Activated CD4-positive, alpha-beta memory T cell treated with anti-CD3 and anti-CD28 coated beads for 36 hours (primary cell): ENCODE measurements at regions of chr17 and their contacts with region 1.

Region 1: GRCh38 chr17:8057691-8058114 is 18.8 kb downstream of the ALOX15B start:
- DNase-seq: peak; percentile 46
- H3K4me3 Mint-ChIP-seq: no peak overlapping the region
- H3K27ac Mint-ChIP-seq: no peak overlapping the region
- H3K4me1 Mint-ChIP-seq: peaks cover 12% of the 10 kb centered on the region
- H3K27me3 Mint-ChIP-seq: peaks cover 42% of the 10 kb centered on the region

Region 2: DNA sequence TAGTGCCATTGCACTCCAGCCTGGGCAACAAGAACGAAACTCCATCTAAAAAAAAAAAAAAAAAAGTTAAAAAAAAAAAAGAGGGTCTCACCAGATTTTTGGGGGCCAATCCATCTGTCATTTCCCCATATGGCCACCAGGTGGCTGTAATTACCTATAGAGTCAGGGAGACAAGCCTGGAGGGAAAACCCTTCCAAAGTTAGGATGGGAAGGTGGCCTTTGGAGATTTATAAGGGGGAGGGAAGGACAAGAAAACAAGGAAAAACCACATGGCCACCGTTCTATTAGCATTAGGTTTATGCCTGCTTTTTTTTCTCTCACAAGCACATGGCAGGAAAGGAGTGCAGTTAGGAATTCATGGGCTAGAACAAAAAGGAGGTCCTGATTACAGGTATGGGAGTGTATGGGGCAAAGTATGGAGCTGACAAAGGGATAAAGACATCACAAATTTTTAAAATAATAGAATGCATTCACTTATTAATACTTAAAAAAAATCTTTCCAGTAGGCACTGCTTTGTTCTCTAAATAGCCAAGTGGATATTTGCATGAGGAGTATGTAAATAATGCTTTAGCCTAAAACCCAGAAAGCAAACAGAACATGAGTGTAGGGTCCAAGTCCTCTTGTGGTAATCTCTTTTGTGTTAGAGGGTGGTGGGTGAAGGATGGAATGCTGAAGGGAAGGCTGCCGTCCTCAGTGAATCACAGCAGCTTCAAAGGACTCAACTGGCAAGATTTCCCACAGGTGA is 194.8 kb before region 1 on chr17:
- CTCF ChIA-PET with region 1: interaction called, 25 read pairs
- POLR2A ChIA-PET with region 1: no interaction called
- intact Hi-C with region 1: no loop called
- DNase-seq: peak; percentile 39
- H3K4me3 Mint-ChIP-seq: no peak overlapping the region
- H3K27ac Mint-ChIP-seq: no peak overlapping the region
- H3K4me1 Mint-ChIP-seq: peaks cover 16% of the 10 kb centered on the region
- H3K27me3 Mint-ChIP-seq: no peaks in the 10 kb centered on the region

Region 3: DNA sequence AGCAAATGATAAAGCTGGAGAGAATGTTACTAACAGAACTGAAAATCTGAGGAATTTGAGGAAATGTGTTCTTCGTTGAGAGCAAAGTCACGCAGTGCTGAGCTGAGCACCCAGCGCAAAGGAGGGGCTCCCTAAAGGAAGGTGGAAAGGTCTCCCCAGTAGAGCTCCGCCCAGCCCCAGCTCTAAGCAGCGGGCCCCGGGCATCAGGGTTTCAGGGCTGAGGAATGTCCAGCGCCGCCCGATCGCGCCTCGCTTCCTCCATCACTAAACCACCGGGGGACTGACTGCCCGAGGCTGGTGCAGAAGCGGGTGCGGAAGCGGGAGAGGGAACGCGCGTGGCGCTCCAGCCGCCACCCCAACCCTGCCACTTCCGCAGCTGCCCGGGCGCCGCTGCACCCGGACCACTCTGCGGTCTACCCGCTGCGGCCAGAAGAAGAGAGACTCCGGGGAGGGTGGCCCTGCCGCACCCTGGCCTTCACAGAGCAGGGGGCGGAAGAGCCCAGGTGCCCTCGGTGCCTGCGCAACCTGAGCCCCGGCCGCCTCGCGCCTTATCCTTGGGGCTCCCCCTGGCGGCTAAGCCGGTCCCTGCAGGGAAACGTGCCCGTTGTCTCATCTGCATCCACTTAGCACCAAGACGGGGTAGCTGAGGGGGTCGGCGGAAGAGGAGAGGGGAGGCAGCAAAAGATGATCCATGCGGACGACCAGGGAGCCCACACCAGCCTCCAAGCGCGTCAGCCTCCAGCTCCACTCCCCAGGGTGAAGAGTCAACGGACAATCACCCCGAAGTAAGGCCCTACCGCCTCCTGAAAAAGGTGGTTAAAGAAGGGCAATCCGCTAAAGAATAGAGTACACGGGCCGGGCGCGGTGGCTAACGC is 67.7 kb before region 1 on chr17:
- CTCF ChIA-PET with region 1: interaction called, 39 read pairs
- POLR2A ChIA-PET with region 1: no interaction called
- intact Hi-C with region 1: no loop called
- DNase-seq: peak; percentile 95
- H3K4me3 Mint-ChIP-seq: peak overlapping the region; percentile 51
- H3K27ac Mint-ChIP-seq: peak overlapping the region; percentile 66
- H3K4me1 Mint-ChIP-seq: peaks cover 22% of the 10 kb centered on the region
- H3K27me3 Mint-ChIP-seq: peaks cover under 1% of the 10 kb centered on the region

Region 4: DNA sequence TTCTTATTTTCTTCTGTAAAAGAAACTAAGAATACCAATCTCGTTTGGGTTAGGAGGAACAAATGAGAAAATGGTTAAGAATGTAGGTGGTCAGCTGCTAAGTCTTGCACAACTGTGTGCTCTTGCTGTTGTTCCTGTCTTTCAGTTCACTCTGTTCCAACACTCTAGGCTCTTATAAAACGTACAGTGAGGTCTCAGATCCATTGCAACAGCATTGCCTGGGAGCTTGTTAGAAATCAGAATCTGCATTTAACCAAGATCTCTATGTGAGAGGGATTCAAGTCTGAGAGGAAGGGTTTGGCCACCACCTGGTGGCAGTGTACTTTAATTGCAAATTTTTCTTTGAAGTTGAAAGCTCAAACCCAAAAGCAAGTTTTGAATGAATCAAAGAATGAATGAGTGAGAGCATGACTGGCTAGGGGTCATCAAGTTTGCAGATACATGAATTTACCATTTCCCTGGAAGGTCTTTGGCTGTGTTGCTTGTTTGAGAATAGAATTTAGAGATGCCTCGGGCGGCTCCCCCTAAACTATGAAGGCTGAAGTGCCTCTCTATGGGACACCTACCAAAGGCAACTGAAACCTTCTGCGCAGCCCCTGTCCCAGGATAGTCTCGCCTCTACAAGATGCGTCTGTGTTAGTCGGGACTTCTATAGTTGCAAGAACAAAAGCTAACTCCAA is 16.3 kb before region 1 on chr17:
- CTCF ChIA-PET with region 1: interaction called, 31 read pairs
- POLR2A ChIA-PET with region 1: no interaction called
- intact Hi-C with region 1: no loop called
- DNase-seq: peak; percentile 62
- H3K4me3 Mint-ChIP-seq: no peak overlapping the region
- H3K27ac Mint-ChIP-seq: no peak overlapping the region
- H3K4me1 Mint-ChIP-seq: no peaks in the 10 kb centered on the region
- H3K27me3 Mint-ChIP-seq: peaks cover 22% of the 10 kb centered on the region

Region 5: GRCh38 chr17:8091033-8091687 is 33.5 kb after region 1 on chr17:
- CTCF ChIA-PET with region 1: interaction called, 64 read pairs
- POLR2A ChIA-PET with region 1: no interaction called
- intact Hi-C with region 1: no loop called
- DNase-seq: no peak
- H3K4me3 Mint-ChIP-seq: no peak overlapping the region
- H3K27ac Mint-ChIP-seq: no peak overlapping the region
- H3K4me1 Mint-ChIP-seq: peaks cover 10% of the 10 kb centered on the region
- H3K27me3 Mint-ChIP-seq: peaks cover 24% of the 10 kb centered on the region

Region 6: GRCh38 chr17:8156246-8156992 is 98.7 kb after region 1 on chr17:
- CTCF ChIA-PET with region 1: interaction called, 12 read pairs
- POLR2A ChIA-PET with region 1: no interaction called
- intact Hi-C with region 1: no loop called
- DNase-seq: peak; percentile 100
- H3K4me3 Mint-ChIP-seq: no peak overlapping the region
- H3K27ac Mint-ChIP-seq: no peak overlapping the region
- H3K4me1 Mint-ChIP-seq: peaks cover 56% of the 10 kb centered on the region
- H3K27me3 Mint-ChIP-seq: no peaks in the 10 kb centered on the region

Region 7: DNA sequence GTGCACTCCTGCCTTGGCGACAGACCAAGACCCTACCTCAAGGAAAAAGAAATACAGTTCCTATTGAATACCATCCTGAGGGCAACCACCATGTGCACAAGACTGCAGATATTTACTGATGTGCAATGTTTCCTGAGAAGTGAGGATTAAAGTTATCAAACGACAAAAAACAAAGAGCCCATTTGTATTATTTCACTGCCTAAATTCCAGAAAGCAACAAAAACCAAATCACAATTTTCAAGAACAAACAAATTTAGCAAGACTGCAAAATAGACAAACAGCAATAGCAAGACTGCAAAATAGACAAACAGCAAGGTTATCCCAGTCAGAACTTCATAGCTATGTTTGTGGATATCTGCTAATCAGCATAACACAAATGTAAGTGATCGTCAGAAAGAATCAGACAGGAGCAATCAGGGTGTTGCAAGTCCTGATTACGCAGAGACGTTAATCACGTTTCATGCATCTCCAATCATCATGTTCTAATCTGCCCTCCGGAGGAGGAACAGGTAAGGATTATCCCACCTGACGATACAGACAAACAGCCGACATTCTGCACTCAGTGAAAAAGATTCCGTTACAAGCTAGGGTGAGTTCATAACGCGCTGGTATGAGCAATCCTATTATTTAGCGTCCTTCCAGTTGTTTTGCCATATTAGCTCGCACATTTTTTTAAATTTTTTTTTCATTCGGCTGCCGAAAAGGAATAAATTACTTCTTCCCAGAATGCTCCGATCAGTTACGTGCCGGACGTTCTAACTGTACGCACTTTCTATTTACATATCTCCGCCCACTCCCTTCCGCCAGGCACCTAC is 115.6 kb after region 1 on chr17:
- CTCF ChIA-PET with region 1: no interaction called
- POLR2A ChIA-PET with region 1: no interaction called
- intact Hi-C with region 1: no loop called
- DNase-seq: peak; percentile 89
- H3K4me3 Mint-ChIP-seq: peak overlapping the region; percentile 77
- H3K27ac Mint-ChIP-seq: peak overlapping the region; percentile 98
- H3K4me1 Mint-ChIP-seq: peaks cover 40% of the 10 kb centered on the region
- H3K27me3 Mint-ChIP-seq: peaks cover 4% of the 10 kb centered on the region